Right ventricle myocardium superior (tissue), 1 donor: ENCODE measurements at regions of chr18 and their contacts with region 1.

Region 1: DNA sequence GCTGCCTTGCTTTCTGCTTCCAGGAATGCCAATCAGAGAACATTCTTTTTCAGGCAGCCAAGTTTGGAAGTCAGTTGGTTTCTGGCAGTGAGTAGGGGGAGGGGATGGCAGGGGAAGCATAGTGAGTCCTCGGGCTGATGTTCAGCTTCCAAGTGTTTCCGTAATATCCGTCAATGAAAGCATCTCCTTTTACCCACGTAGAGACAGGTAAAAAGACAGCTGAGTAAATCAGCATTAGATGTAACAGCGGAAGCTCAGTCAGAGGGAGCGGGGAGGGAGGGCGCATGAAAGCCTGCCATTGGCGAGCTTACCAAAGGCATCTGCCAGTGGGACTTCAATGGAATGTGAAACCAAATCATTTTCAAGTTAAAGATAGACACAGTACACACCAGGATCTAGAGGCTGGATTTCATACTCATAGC is 117.1 kb upstream of the DTNA start:
- DNase-seq: peak; percentile 71
- ATAC-seq: peak; percentile 92

Region 2: GRCh38 chr18:34493099-34493544 is 99.8 kb before region 1 on chr18:
- intact Hi-C with region 1: loop called (anchors 5 kb)
- DNase-seq: peak; percentile 86
- ATAC-seq: peak; percentile 89